Mammary epithelial cell (primary cell): ENCODE measurements at regions of chr11 and their contacts with region 1.

Region 1: DNA sequence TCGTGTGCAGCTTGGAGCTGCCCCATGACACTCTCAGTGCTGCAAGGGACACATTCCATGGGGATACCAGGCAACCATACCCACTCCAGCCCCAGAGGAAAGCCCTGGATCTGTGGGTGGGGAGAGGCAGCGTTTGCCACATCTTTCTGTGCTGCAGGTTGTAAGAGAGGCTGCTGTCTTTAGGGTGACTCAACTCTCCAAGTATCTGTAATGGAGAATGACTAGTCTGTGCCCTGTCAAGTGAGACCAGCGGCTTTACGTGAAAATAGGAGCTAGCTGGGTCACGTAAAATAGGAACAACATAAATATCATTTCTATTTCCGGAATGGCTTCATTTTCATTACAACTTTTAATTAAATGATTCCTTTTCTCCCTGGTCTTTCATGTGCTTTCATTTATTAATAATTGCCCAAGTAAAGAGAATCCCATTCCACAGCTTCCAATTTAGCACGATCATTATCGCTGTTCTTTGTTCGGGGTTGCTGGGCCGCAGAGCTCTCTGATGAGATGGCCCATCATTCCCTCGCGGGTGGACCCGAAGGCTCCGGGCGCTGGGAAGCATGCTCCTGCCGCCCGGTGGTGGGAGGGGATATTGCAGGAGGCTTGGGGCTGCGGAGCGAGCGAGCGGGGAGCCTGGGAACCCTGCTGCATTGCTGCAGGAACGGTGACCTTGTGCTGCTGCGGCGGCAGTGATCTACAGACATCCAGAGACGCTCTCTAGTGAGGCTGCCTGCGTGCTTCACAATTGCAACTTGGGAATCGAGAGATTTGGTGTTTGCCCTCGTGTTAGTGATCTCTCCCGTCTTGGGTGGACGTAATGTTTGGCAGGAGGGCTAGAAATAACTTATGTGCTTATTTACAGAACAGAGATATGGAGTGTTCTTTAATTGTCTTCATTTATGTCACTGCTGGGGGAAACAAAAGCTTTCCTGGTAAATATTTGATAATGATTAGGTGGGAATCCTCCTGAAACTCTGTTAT is 10.6 kb downstream of the SLC6A5 start:
- DNase-seq: peak; percentile 79
- H3K4me3 ChIP-seq: peak overlapping the region; percentile 2 to 19 (median 18)
- H3K27ac ChIP-seq: peak overlapping the region; percentile 28
- H3K4me1 ChIP-seq: peaks cover 22% of the 10 kb centered on the region
- H3K27me3 ChIP-seq: peaks cover 24% of the 10 kb centered on the region
- CTCF ChIP-seq: peak; percentile 85 to 98

Region 2: GRCh38 chr11:20387241-20388095 is 222.5 kb before region 1 on chr11 and contains the start of gene PRMT3:
- CTCF ChIA-PET with region 1: no interaction called
- dilution Hi-C with region 1: loop called (anchors 10 kb)
- in situ Hi-C with region 1: no loop called
- intact Hi-C with region 1: loop called (anchors 1 kb)
- DNase-seq: peak; percentile 95
- H3K4me3 ChIP-seq: peak within 1 kb of the TSS; percentile 80 to 99 (median 95)
- H3K27ac ChIP-seq: peak within 1 kb of the TSS; percentile 89
- H3K4me1 ChIP-seq: peaks cover 11% of the 10 kb centered on the region
- H3K27me3 ChIP-seq: no peaks in the 10 kb centered on the region
- CTCF ChIP-seq: peak in 1 of 2 donors; percentile 99
- total RNA-seq, gene PRMT3: 23.3 to 26.3 TPM

Region 3: GRCh38 chr11:20397281-20397680 is 212.7 kb before region 1 on chr11:
- CTCF ChIA-PET with region 1: interaction called, 6 read pairs
- dilution Hi-C with region 1: no loop called
- in situ Hi-C with region 1: loop called (anchors 5 kb)
- intact Hi-C with region 1: loop called (anchors 1 kb)
- DNase-seq: peak; percentile 49
- H3K4me3 ChIP-seq: no peak overlapping the region
- H3K27ac ChIP-seq: no peak overlapping the region
- H3K4me1 ChIP-seq: no peaks in the 10 kb centered on the region
- H3K27me3 ChIP-seq: no peaks in the 10 kb centered on the region
- CTCF ChIP-seq: peak; percentile 64 to 76

Region 4: DNA sequence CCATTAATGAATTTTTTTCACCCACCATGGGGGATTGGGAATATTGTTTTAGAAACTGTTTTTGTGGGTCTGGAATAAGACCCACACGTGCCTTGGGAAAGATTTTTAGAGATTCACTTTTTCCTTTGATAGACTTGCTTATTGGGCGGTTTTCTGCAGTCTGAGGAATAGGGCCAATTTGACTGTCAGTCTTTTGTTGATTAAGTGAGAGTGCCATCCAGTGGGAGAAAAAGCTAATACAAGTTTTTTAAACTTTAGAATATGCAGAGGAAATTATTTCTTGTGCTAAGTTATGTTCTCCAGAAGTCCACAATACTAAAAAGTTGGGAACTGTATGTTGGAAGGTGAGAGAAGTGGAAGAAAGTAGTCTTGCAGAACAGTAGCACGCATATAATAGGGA is 166.4 kb before region 1 on chr11:
- CTCF ChIA-PET with region 1: interaction called, 5 read pairs
- dilution Hi-C with region 1: no loop called
- in situ Hi-C with region 1: no loop called
- intact Hi-C with region 1: loop called (anchors 2 kb)
- DNase-seq: peak; percentile 4
- H3K4me3 ChIP-seq: no peak overlapping the region
- H3K27ac ChIP-seq: no peak overlapping the region
- H3K4me1 ChIP-seq: no peaks in the 10 kb centered on the region
- H3K27me3 ChIP-seq: no peaks in the 10 kb centered on the region
- CTCF ChIP-seq: peak; percentile 39 to 43

Region 5: GRCh38 chr11:20501252-20501651 is 108.8 kb before region 1 on chr11:
- CTCF ChIA-PET with region 1: no interaction called
- dilution Hi-C with region 1: no loop called
- in situ Hi-C with region 1: loop called in 1 of 2 experiments (anchors 25 kb)
- intact Hi-C with region 1: no loop called
- DNase-seq: no peak
- H3K4me3 ChIP-seq: no peak overlapping the region
- H3K27ac ChIP-seq: no peak overlapping the region
- H3K4me1 ChIP-seq: no peaks in the 10 kb centered on the region
- H3K27me3 ChIP-seq: no peaks in the 10 kb centered on the region
- CTCF ChIP-seq: no peak

Region 6: DNA sequence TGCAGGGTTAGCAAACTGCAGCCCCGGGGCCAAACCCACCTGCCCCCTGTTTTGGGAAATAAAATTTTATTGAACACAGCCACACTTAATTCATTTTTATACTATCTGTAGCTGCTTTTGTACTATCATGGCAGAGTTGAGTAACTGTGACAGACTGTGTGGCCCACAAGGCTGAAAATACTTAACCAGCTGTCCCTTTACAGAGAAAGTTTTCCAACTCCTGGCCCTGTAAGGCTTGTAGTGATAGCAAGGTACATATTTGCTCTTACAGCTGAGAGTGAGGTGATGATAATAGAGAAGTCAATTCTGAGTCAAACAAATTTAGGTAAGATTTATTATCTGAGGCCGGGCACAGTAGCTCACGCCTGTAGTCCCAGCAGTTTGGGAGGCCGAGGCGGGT is 98.0 kb before region 1 on chr11:
- CTCF ChIA-PET with region 1: no interaction called
- dilution Hi-C with region 1: no loop called
- in situ Hi-C with region 1: loop called in 1 of 2 experiments (anchors 25 kb)
- intact Hi-C with region 1: loop called (anchors 10 kb)
- DNase-seq: no peak
- H3K4me3 ChIP-seq: no peak overlapping the region
- H3K27ac ChIP-seq: no peak overlapping the region
- H3K4me1 ChIP-seq: no peaks in the 10 kb centered on the region
- H3K27me3 ChIP-seq: no peaks in the 10 kb centered on the region
- CTCF ChIP-seq: no peak

Region 7: GRCh38 chr11:20529757-20530156 is 80.3 kb before region 1 on chr11:
- CTCF ChIA-PET with region 1: interaction called, 3 read pairs
- dilution Hi-C with region 1: no loop called
- in situ Hi-C with region 1: loop called in 1 of 2 experiments (anchors 25 kb)
- intact Hi-C with region 1: loop called (anchors 1 kb)
- DNase-seq: no peak
- H3K4me3 ChIP-seq: no peak overlapping the region
- H3K27ac ChIP-seq: no peak overlapping the region
- H3K4me1 ChIP-seq: no peaks in the 10 kb centered on the region
- H3K27me3 ChIP-seq: no peaks in the 10 kb centered on the region
- CTCF ChIP-seq: peak in 1 of 2 donors; percentile 26

Region 8: GRCh38 chr11:20739107-20739506 is 129.1 kb after region 1 on chr11:
- CTCF ChIA-PET with region 1: no interaction called
- dilution Hi-C with region 1: no loop called
- in situ Hi-C with region 1: no loop called
- intact Hi-C with region 1: no loop called
- DNase-seq: no peak
- H3K4me3 ChIP-seq: no peak overlapping the region
- H3K27ac ChIP-seq: no peak overlapping the region
- H3K4me1 ChIP-seq: no peaks in the 10 kb centered on the region
- H3K27me3 ChIP-seq: no peaks in the 10 kb centered on the region
- CTCF ChIP-seq: no peak